ENCODE measurements at regions of chr7 and their contacts with region 1.

Region 1: DNA sequence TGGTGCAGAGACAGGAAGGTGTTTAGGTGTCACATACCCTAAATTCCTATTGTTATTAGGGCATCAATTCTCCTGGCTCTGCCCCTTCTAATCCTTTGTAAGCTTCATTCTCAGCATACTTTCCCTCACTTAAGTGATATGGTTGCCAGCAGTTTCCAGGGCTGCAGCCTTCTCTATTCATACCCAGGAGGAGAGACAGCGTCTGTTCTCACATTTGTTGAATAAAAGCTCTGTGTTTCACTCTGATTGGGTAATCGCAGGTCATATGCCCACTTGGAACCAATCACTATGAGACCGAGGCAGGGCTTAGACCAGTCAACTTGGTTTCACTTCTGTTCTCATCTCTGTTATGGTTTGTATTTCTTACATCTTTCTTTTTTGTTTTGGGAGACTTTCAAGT is 109.6 kb upstream of the MTPN start:
- DNase-seq: peak; percentile 30
- ATAC-seq: peak; percentile 73
- H3K4me3 ChIP-seq: peak overlapping the region in 1 of 2 experiments; percentile 10; a peak in 1 of 4 replicates
- H3K27ac ChIP-seq: no peak overlapping the region
- H3K4me1 ChIP-seq: no peaks in the 10 kb centered on the region
- H3K27me3 ChIP-seq: no peaks in the 10 kb centered on the region
- CTCF ChIP-seq: no peak

Region 2: GRCh38 chr7:136492366-136492765 is 405.7 kb after region 1 on chr7:
- CTCF ChIA-PET with region 1: no interaction called
- POLR2A ChIA-PET with region 1: no interaction called
- in situ Hi-C with region 1: no loop called
- intact Hi-C with region 1: no loop called
- DNase-seq: no peak
- ATAC-seq: no peak
- H3K4me3 ChIP-seq: no peak overlapping the region
- H3K27ac ChIP-seq: no peak overlapping the region
- H3K4me1 ChIP-seq: no peaks in the 10 kb centered on the region
- H3K27me3 ChIP-seq: no peaks in the 10 kb centered on the region
- CTCF ChIP-seq: no peak

Region 3: DNA sequence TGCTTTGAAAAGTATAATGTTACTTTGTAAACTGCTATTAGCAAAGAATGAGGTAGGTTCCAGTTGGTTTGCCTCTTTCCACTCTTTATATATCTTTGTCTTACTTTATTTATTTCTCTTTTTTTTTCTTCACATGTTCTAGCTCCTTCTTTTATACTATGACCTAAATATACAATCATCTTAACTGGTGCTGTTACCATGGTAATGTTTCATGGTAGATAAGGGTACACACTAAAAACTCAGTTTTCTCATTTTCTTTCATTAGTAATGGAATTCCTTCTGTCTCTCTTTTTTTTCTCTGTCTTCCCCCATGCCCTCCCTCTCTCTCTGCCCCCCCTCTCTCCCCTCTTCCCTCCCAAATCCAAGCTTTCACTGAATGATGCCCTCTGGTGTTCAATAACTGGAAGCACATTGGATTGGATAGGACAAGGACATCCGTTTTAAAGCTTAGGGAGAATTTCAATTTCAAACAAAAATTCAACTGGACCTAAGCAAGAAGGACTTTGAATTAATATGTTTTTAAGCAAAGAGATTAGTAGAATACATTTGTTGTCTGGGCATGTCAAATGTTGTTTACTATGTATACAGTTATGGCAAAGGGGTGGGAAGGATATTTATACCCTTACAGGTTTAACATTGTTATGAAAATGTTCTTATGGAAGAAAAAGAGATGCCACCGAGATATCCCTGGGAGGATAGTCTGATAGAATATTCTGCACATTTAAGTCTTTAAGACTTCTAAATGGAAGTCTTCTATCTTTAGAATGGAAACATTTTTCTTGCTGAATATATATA is 787.7 kb after region 1 on chr7:
- CTCF ChIA-PET with region 1: interaction called, 11 read pairs
- POLR2A ChIA-PET with region 1: no interaction called
- in situ Hi-C with region 1: no loop called
- intact Hi-C with region 1: no loop called
- DNase-seq: peak; percentile 10
- ATAC-seq: no peak
- H3K4me3 ChIP-seq: no peak overlapping the region
- H3K27ac ChIP-seq: no peak overlapping the region
- H3K4me1 ChIP-seq: no peaks in the 10 kb centered on the region
- H3K27me3 ChIP-seq: peaks cover 2% of the 10 kb centered on the region
- CTCF ChIP-seq: peak; percentile 56; the same call in 1 of the 2 replicates

Measured in Panc1 (cell line).